PC-3 (cell line): ENCODE measurements at regions of chrX and their contacts with region 1.

Region 1: DNA sequence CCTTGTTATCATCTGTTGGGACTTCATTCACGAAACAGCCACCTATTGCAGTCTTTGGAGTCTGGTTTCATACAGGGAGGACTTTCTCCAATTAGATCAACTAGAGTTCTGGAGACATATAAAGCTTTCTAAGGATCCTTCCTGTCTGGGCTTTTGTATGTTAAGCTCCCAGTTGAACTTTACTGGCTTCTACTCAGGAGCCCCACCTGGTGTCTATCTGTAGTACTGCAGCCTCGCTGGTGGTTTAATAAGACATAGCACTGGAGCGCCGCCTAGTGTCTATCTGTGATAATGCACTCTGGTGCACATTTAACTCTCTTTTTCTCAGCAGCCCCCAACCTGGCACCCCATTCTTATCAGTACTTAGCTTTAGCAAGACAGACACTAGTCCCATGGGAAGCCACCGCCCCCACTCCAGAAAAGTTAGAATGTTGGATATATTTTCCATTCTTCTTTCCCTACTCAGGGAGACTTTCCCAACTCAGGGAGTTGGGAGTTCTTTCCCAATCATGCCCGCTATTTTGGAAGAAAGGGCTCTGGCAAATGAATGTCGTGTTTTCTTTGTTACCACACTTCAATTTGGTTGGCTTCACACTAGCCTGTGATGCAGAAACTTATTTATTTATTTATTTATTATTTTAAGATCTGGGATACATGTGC is 36.9 kb upstream of the SYTL4 start:
- DNase-seq: peak; percentile 87
- ATAC-seq: peak; percentile 35; the same call in 1 of the 2 replicates
- H3K4me3 ChIP-seq: no peak overlapping the region
- H3K27ac ChIP-seq: no peak overlapping the region
- H3K4me1 ChIP-seq: no peaks in the 10 kb centered on the region
- H3K27me3 ChIP-seq: peaks cover 11% of the 10 kb centered on the region
- CTCF ChIP-seq: peak; percentile 98

Region 2: DNA sequence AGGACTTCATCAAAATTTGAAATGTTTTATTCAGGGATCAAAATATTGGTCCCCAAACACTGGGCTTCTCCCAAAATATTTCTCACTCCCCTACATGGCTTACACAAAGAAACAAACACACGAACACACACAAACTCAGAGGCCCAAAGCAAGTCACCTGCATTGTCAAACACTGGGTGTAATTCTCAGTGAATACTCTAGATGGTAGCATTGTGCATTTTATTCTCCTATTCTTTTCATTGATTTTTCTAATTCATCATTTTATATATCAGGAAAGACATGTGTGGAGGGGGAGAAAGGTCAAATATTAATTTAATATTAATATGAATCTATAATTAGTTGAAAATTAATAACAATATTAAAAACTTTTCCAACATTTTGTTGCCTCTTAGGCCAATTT is 256.3 kb before region 1 on chrX:
- CTCF ChIA-PET with region 1: no interaction called
- POLR2A ChIA-PET with region 1: no interaction called
- intact Hi-C with region 1: loop called (anchors 2 kb)
- DNase-seq: peak; percentile 40
- ATAC-seq: no peak; the same call in 1 of the 2 replicates
- H3K4me3 ChIP-seq: no peak overlapping the region
- H3K27ac ChIP-seq: no peak overlapping the region
- H3K4me1 ChIP-seq: peaks cover under 1% of the 10 kb centered on the region; the same call in 1 of the 2 replicates
- H3K27me3 ChIP-seq: no peaks in the 10 kb centered on the region
- CTCF ChIP-seq: peak; percentile 55

Region 3: GRCh38 chrX:100587885-100588284 is 180.9 kb before region 1 on chrX:
- CTCF ChIA-PET with region 1: no interaction called
- POLR2A ChIA-PET with region 1: no interaction called
- intact Hi-C with region 1: no loop called
- DNase-seq: no peak
- ATAC-seq: no peak
- H3K4me3 ChIP-seq: no peak overlapping the region
- H3K27ac ChIP-seq: no peak overlapping the region
- H3K4me1 ChIP-seq: no peaks in the 10 kb centered on the region
- H3K27me3 ChIP-seq: peaks cover 25% of the 10 kb centered on the region
- CTCF ChIP-seq: no peak

Region 4: GRCh38 chrX:100615005-100615404 is 153.8 kb before region 1 on chrX:
- CTCF ChIA-PET with region 1: interaction called, 11 read pairs
- POLR2A ChIA-PET with region 1: no interaction called
- intact Hi-C with region 1: no loop called
- DNase-seq: peak; percentile 78
- ATAC-seq: peak; percentile 63
- H3K4me3 ChIP-seq: no peak overlapping the region
- H3K27ac ChIP-seq: no peak overlapping the region
- H3K4me1 ChIP-seq: no peaks in the 10 kb centered on the region
- H3K27me3 ChIP-seq: no peaks in the 10 kb centered on the region
- CTCF ChIP-seq: peak; percentile 67

Region 5: GRCh38 chrX:100674705-100675104 is 94.1 kb before region 1 on chrX:
- CTCF ChIA-PET with region 1: interaction called, 58 read pairs
- POLR2A ChIA-PET with region 1: interaction called, 10 read pairs
- intact Hi-C with region 1: loop called (anchors 1 kb)
- DNase-seq: no peak
- ATAC-seq: no peak
- H3K4me3 ChIP-seq: no peak overlapping the region
- H3K27ac ChIP-seq: no peak overlapping the region
- H3K4me1 ChIP-seq: peaks cover 28% of the 10 kb centered on the region
- H3K27me3 ChIP-seq: no peaks in the 10 kb centered on the region
- CTCF ChIP-seq: no peak

Region 6: DNA sequence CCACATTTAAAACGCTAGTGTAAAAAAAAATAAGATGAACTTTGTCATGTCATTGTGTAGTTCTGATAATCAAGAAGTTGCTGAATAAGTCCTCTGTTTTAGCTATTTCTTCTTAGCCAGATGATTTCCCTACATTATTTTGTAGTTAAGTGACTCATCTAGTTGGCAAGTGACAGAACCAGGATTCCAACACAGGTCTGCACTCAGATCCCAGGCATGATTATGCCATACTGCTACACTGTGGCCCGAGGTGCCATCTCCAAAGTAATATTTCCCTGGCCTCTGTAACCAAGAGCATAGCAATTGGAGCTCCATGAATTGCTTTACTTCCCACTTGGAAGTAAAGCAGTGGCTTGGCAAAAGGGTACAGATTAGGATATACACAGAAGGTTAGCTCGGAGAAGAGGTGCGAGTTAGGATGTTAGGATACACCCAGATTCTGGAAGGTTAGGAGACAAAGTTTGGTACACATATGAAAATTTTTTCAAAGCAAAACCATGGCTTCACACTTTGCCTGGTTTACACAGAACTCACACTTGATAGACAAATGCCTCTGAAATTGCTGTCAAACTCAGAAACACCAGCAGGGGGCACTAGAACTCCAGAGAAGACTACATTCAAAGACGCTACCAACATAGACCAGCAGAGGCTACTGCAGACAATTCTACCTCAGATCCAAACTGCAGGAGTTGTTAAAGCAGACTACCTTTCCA is 83.4 kb before region 1 on chrX:
- CTCF ChIA-PET with region 1: interaction called, 46 read pairs
- POLR2A ChIA-PET with region 1: no interaction called
- intact Hi-C with region 1: loop called (anchors 1 kb)
- DNase-seq: peak; percentile 86
- ATAC-seq: peak; percentile 85
- H3K4me3 ChIP-seq: no peak overlapping the region
- H3K27ac ChIP-seq: no peak overlapping the region
- H3K4me1 ChIP-seq: peaks cover 12% of the 10 kb centered on the region
- H3K27me3 ChIP-seq: no peaks in the 10 kb centered on the region
- CTCF ChIP-seq: peak; percentile 96

Region 7: DNA sequence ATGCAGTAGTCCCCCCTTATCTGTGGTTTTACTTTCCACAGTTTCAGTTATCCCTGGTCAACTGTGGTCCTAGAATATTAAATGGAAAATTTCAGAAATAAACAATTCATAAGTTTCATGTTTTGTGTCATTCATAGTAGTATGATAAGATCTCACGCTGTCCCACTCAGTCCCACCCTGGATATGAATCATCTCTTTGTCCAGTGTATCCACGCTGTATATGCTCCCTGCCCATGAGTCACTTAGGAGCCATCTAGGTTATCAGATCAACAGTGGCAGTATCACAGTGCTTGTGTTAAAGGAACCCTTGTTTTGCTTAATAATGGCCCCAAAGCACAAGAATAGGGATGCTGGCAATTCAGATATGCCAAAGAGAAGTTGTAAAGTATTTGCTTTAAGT is 20.7 kb before region 1 on chrX:
- CTCF ChIA-PET with region 1: no interaction called
- POLR2A ChIA-PET with region 1: no interaction called
- intact Hi-C with region 1: no loop called
- DNase-seq: peak; percentile 44
- ATAC-seq: peak; percentile 81
- H3K4me3 ChIP-seq: no peak overlapping the region
- H3K27ac ChIP-seq: peak overlapping the region; percentile 40
- H3K4me1 ChIP-seq: peaks cover 9% of the 10 kb centered on the region
- H3K27me3 ChIP-seq: no peaks in the 10 kb centered on the region
- CTCF ChIP-seq: no peak